Testis (tissue), 5 donors: ENCODE measurements at regions of chr20 and their contacts with region 1.

Region 1: GRCh38 chr20:32336918-32337347 is 21.2 kb upstream of the ASXL1 start:
- DNase-seq: no peak
- H3K4me3 ChIP-seq: no peak overlapping the region
- H3K27ac ChIP-seq: no peak overlapping the region
- H3K4me1 ChIP-seq: no peaks in the 10 kb centered on the region
- H3K27me3 ChIP-seq: no peaks in the 10 kb centered on the region
- CTCF ChIP-seq: peak in 2 of 3 experiments; percentile 47 to 49
- POLR2A ChIP-seq: no peak

Region 2: GRCh38 chr20:32400476-32400875 is 63.5 kb after region 1 on chr20:
- intact Hi-C with region 1: no loop called
- DNase-seq: no peak
- H3K4me3 ChIP-seq: no peak overlapping the region
- H3K27ac ChIP-seq: no peak overlapping the region
- H3K4me1 ChIP-seq: no peaks in the 10 kb centered on the region
- H3K27me3 ChIP-seq: no peaks in the 10 kb centered on the region
- CTCF ChIP-seq: no peak
- POLR2A ChIP-seq: no peak

Region 3: DNA sequence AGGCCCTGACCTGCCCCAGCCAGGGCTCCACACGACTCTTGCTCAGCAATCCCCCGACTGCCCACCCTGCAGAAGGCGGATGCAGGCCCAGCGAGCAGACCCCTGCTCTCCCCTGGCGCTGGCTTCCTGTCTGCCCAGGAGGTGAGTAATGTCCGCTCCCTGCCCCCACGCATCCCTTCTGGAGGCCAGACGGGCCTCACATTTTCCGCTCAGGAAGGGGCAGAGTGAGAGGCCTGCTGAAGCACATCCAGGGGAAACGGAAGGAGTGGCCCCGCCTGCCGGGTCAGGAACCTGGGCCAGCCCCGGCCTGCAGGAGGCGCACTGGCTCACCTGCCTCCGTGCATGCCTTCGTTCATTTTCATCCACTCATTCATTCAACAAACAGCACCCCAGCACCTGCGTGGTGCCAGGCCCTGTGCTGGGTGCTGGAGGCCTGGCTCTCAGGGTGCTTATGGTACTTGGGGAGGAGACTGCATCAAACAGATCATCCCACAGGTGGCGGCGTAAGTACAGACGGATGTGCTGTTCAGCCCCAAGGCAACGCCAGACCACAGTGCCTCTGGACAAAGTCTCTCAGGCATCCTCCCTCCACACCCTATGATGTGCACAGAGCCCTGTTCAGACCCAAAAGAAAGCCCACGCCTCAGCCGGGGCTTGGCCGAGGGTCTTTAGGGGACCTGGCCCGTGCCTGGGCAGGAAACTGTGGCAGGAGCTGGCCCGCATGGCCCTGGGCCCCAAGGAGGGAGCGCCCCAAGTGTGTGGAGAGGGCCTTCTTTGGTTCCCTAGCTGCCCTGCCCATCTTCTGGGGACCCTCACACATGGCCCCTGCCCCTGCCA is 133.3 kb after region 1 on chr20:
- intact Hi-C with region 1: loop called (anchors 10 kb)
- DNase-seq: no peak
- H3K4me3 ChIP-seq: no peak overlapping the region
- H3K27ac ChIP-seq: no peak overlapping the region
- H3K4me1 ChIP-seq: peaks cover 50% of the 10 kb centered on the region
- H3K27me3 ChIP-seq: no peaks in the 10 kb centered on the region
- CTCF ChIP-seq: no peak
- POLR2A ChIP-seq: no peak

Region 4: DNA sequence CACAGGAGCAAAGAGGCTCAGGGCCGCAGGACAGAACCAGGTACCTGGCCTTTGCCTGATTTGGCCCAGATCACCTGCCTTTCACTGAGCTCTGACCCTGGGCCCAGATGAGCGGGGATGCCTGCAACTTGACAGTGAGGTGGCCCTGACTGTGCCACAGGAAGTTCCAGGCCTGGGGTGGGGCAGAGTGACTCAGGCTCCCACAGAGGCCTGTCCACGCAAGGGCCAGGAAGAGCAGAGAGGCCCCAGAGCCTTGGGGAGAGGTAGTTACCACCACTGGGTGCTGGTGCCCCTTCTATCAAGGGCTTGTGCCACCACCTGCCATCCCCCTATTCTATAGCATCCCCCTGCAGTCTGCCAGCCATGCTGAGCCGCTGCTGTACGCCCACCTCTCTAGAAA is 252.3 kb after region 1 on chr20:
- intact Hi-C with region 1: no loop called
- DNase-seq: no peak
- H3K4me3 ChIP-seq: no peak overlapping the region
- H3K27ac ChIP-seq: no peak overlapping the region
- H3K4me1 ChIP-seq: no peaks in the 10 kb centered on the region
- H3K27me3 ChIP-seq: no peaks in the 10 kb centered on the region
- CTCF ChIP-seq: no peak
- POLR2A ChIP-seq: no peak